HepG2 (cell line): ENCODE measurements at regions of chr5 and their contacts with region 1.

Region 1: DNA sequence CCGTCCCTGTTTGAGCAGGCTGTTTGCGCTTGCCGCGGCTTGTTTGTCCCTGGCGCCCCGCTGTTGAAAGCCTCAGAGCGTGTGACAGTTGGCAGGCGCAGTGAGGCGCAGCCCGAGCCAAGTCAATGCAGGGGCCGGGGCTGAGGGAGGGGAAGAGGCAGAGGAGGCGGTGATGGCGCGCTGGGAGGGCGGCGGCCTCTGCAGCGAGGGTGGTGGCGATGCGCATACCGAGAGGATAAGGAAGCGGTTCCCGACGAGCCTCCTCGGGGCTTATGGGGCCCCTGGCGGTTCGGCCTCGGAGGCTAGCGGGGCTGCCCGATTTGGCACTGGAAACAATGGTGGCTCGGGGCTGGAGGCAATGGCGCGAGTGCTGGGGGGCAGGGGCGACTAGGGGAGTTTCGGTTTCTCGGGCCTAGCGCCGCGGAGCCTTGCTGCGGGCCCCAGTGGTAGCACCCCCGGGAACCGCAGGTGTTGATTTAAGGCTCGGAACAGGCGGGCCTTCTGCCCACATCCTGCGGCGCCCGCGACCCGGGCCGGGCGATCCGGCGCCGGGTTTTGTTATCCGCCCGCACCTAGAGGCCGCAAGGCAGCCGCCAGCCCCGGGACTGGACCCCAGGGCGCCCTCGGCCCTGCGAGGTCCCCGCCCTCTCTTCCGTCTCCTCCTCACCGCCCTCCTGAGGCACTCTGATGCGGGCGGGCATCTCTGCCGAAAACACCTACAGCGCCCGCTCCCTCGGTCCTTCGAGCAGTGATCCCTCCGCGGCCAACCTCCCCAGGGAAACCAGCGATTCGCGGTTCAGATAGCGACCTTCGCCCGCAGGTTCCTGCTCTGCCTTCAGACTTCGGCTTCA is 947 bp upstream of the LNPEP start:
- DNase-seq: peak; percentile 88
- ATAC-seq: peak; percentile 84
- H3K4me3 ChIP-seq: peak overlapping the region; percentile 68 to 84 (median 73)
- H3K27ac ChIP-seq: peak overlapping the region; percentile 95
- H3K4me1 ChIP-seq: peaks cover 31% of the 10 kb centered on the region
- H3K27me3 ChIP-seq: no peaks in the 10 kb centered on the region
- CTCF ChIP-seq: peak; percentile 3; the same call in 1 of the 2 replicates
- EP300 ChIP-seq: peak in 1 of 2 experiments; percentile 60; a peak in 1 of 4 replicates
- POLR2A ChIP-seq: peak; percentile 57 to 71
- RAD21 ChIP-seq: 0 out of 2 replicates have a peak, but pooled peaks have one; percentile 11

Region 2: DNA sequence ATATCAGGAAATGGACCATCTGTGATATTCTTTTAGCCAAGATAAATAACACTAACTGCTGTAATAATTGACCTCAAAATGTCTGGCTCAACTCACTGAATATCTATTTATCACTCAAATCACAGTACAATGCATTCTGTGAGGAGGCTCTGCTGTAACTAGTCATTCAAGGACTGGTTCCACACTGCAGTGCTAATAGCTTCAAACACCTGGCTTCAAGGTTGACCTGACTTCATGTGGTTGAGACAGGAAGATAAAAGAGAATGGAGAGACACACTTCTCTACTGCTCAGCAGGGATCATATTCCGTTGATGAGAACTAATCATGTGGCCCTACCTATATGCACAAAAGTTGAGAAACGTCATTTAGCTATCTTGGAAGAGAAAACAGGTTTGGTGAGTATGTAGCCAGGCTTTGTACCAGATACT is 1207.2 kb before region 1 on chr5:
- CTCF ChIA-PET with region 1: no interaction called
- POLR2A ChIA-PET with region 1: no interaction called
- in situ Hi-C with region 1: no loop called
- intact Hi-C with region 1: no loop called
- DNase-seq: peak; percentile 18
- ATAC-seq: no peak
- H3K4me3 ChIP-seq: no peak overlapping the region
- H3K27ac ChIP-seq: no peak overlapping the region
- H3K4me1 ChIP-seq: peaks cover 44% of the 10 kb centered on the region
- H3K27me3 ChIP-seq: no peaks in the 10 kb centered on the region; a peak in 1 of 5 replicates
- CTCF ChIP-seq: no peak
- EP300 ChIP-seq: no peak
- POLR2A ChIP-seq: no peak
- RAD21 ChIP-seq: no peak

Region 3: DNA sequence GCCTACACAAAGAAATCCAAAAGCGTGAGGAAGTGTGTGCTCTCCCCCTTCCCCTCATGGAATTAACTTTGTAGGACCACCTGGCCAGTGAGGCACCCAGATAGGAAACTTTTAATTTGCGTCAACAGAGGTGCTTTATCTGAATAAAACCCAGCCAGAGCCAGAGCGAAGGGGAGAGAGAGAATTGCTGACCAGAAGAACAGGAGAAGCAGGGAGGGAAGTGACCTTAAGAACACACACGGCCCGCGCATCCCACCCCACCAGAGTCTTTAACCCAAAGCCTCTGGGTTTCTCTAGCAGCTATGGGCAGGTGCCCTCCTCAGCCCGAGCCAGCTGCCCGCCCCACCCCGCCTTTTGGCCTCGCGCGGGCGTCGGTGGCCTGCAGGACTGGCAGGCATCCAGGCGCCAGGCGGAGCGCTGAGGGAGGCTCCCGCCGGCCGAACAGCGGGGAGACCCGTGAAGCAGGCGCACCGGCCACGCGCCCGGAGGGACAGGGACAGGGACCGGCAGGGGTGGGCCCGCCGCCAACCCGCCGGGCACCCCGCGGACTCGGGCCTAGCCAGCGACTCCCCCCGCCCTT is 127.8 kb before region 1 on chr5:
- CTCF ChIA-PET with region 1: no interaction called
- POLR2A ChIA-PET with region 1: interaction called, 19 read pairs
- in situ Hi-C with region 1: no loop called
- intact Hi-C with region 1: loop called (anchors 1 kb)
- DNase-seq: peak; percentile 61
- ATAC-seq: peak; percentile 77
- H3K4me3 ChIP-seq: peak overlapping the region; percentile 86 to 94 (median 90)
- H3K27ac ChIP-seq: peak overlapping the region; percentile 99
- H3K4me1 ChIP-seq: peaks cover 41% of the 10 kb centered on the region
- H3K27me3 ChIP-seq: no peaks in the 10 kb centered on the region
- CTCF ChIP-seq: no peak
- EP300 ChIP-seq: no peak
- POLR2A ChIP-seq: peak; percentile 70 to 71
- RAD21 ChIP-seq: peak; percentile 51

Region 4: DNA sequence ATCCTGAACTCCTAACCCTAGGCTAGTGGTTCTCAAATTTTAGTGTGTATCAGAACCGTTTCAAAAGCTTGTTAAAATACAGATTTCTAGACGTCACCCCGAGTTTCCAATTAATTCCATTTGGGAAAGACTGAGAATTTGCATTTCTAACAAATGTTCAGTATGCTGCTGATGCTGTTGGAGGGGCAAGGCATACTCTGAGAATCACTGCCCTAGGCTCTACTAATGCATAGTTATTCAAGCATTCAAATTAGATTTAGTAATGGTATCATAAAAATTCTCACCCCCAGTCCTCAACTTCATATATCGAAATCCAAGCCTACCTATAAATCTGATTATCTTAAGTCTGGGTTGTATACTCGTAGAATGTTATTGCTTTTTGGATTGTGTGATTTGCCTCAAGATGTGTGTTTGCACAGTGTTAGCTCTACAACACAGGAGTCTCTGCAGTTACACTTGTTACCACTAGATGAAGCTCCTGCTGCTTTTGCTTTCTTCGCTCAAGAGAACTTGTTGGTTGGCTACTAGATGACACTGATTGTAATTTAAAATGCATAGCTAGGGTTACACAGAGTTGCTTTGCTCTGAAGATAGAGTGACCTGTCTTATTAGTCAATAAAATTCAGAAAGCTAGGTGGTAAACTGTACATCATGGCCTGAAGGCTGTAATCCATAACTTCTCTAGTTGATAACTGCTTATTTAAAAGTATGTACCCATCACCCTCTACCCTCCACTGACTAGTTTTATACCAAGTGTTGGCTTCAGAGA is 66.1 kb before region 1 on chr5:
- CTCF ChIA-PET with region 1: interaction called, 3 read pairs
- POLR2A ChIA-PET with region 1: interaction called, 12 read pairs
- in situ Hi-C with region 1: no loop called
- intact Hi-C with region 1: loop called (anchors 1 kb)
- DNase-seq: peak; percentile 62
- ATAC-seq: peak; percentile 95
- H3K4me3 ChIP-seq: no peak overlapping the region
- H3K27ac ChIP-seq: no peak overlapping the region
- H3K4me1 ChIP-seq: peaks cover 58% of the 10 kb centered on the region
- H3K27me3 ChIP-seq: no peaks in the 10 kb centered on the region; a peak in 1 of 5 replicates
- CTCF ChIP-seq: peak; percentile 89
- EP300 ChIP-seq: no peak
- POLR2A ChIP-seq: no peak
- RAD21 ChIP-seq: peak; percentile 71

Region 5: GRCh38 chr5:96876292-96876850 is 58.6 kb before region 1 on chr5 and contains the start of gene ERAP2:
- CTCF ChIA-PET with region 1: no interaction called
- POLR2A ChIA-PET with region 1: interaction called, 12 read pairs
- in situ Hi-C with region 1: no loop called
- intact Hi-C with region 1: loop called (anchors 1 kb)
- DNase-seq: peak; percentile 25
- ATAC-seq: peak; percentile 59
- H3K4me3 ChIP-seq: peak within 1 kb of the TSS; percentile 71 to 88 (median 71)
- H3K27ac ChIP-seq: peak within 1 kb of the TSS; percentile 58
- H3K4me1 ChIP-seq: peaks cover 24% of the 10 kb centered on the region
- H3K27me3 ChIP-seq: no peaks in the 10 kb centered on the region
- CTCF ChIP-seq: no peak
- EP300 ChIP-seq: no peak
- POLR2A ChIP-seq: no peak
- RAD21 ChIP-seq: no peak
- total RNA-seq, gene ERAP2: 12.8 and 16.6 TPM in 2 replicates

Region 6: GRCh38 chr5:96901384-96901783 is 33.5 kb before region 1 on chr5:
- CTCF ChIA-PET with region 1: no interaction called
- POLR2A ChIA-PET with region 1: no interaction called
- in situ Hi-C with region 1: no loop called
- intact Hi-C with region 1: no loop called
- DNase-seq: peak; percentile 20
- ATAC-seq: peak; percentile 77
- H3K4me3 ChIP-seq: no peak overlapping the region
- H3K27ac ChIP-seq: no peak overlapping the region
- H3K4me1 ChIP-seq: no peaks in the 10 kb centered on the region
- H3K27me3 ChIP-seq: no peaks in the 10 kb centered on the region
- CTCF ChIP-seq: peak; percentile 26; the same call in 1 of the 2 replicates
- EP300 ChIP-seq: no peak
- POLR2A ChIP-seq: no peak
- RAD21 ChIP-seq: no peak

Region 7: DNA sequence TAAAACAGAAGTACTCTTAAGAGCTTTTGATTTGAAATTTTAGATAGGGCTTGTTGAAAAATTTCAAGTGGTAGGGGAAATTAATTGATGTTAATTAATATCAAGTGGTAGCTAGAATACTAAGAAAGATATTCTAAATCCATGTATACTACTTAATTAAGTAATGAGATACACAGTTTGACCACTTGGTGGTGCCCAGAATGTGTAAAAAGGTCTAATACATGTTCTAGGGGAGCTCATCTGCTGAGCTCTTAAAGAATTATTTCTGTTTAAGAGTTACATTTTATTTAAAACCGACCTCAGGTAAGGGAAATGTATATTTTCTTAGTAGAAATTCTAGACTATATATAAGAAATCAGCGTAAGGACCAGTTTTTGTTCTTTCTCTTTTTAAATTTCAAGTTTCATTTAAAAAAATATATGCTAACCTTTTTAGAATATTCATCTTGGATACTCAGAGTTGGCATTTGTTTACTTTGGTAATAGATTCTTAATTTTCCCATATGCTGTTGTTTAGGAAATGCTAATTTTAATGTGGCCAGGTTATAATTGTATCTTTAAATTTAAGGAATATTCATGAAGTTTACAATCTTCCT is 62.4 kb after region 1 on chr5:
- CTCF ChIA-PET with region 1: no interaction called
- POLR2A ChIA-PET with region 1: no interaction called
- in situ Hi-C with region 1: no loop called
- intact Hi-C with region 1: loop called (anchors 5 kb)
- DNase-seq: peak; percentile 41
- ATAC-seq: peak; percentile 77
- H3K4me3 ChIP-seq: no peak overlapping the region
- H3K27ac ChIP-seq: no peak overlapping the region
- H3K4me1 ChIP-seq: peaks cover 10% of the 10 kb centered on the region
- H3K27me3 ChIP-seq: no peaks in the 10 kb centered on the region
- CTCF ChIP-seq: peak; percentile 40; the same call in 1 of the 2 replicates
- EP300 ChIP-seq: no peak
- POLR2A ChIP-seq: no peak
- RAD21 ChIP-seq: no peak

Region 8: DNA sequence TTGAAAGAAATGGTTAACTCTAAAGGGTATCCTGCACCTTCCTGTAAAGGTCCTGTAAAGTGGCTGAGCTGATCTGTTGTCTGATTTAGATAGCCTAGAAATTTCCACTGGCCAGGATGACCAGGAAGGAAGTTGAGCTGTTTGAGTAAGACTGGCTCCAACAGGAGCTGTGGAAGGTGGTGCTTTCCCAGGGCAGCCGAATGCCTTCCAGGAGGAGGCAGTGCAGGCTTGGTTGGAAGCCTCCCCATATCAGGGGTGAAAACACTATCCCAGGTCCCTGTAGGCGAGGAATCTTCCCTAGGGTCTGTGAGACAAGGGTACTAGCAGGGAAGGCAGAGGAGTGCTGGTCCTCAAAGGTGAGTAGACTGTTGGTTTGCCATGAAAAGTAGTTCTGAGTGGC is 109.1 kb after region 1 on chr5:
- CTCF ChIA-PET with region 1: no interaction called
- POLR2A ChIA-PET with region 1: no interaction called
- in situ Hi-C with region 1: no loop called
- intact Hi-C with region 1: loop called (anchors 5 kb)
- DNase-seq: peak; percentile 27
- ATAC-seq: peak; percentile 97
- H3K4me3 ChIP-seq: no peak overlapping the region
- H3K27ac ChIP-seq: no peak overlapping the region
- H3K4me1 ChIP-seq: peaks cover 23% of the 10 kb centered on the region
- H3K27me3 ChIP-seq: no peaks in the 10 kb centered on the region
- CTCF ChIP-seq: peak; percentile 84
- EP300 ChIP-seq: no peak
- POLR2A ChIP-seq: no peak
- RAD21 ChIP-seq: peak; percentile 46